Activated naive CD4-positive, alpha-beta T cell treated with anti-CD3 and anti-CD28 coated beads for 36 hours (primary cell): ENCODE measurements at regions of chr15 and their contacts with region 1.

Region 1: DNA sequence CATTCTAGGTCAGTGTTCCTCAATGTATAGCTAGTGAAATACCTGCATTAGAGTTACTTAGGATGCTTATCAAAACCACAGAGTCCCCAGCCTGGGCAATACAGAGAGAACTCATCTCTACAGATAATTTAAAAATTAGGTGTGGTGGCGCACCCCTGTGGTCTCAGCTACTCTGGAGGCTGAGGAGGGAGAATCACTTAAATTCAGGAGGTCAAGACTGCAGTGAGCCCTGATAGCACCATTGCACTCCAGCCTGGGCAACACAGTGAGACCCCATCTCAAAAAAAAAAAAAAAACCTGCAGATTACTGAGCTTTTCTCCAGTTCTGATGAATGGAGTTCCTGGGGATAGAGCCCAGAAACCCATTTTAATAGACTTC is 10.1 kb upstream of the MINDY2 start:
- DNase-seq: peak; percentile 62
- H3K4me3 Mint-ChIP-seq: no peak overlapping the region
- H3K27ac Mint-ChIP-seq: no peak overlapping the region
- H3K4me1 Mint-ChIP-seq: no peaks in the 10 kb centered on the region
- H3K27me3 Mint-ChIP-seq: no peaks in the 10 kb centered on the region

Region 2: DNA sequence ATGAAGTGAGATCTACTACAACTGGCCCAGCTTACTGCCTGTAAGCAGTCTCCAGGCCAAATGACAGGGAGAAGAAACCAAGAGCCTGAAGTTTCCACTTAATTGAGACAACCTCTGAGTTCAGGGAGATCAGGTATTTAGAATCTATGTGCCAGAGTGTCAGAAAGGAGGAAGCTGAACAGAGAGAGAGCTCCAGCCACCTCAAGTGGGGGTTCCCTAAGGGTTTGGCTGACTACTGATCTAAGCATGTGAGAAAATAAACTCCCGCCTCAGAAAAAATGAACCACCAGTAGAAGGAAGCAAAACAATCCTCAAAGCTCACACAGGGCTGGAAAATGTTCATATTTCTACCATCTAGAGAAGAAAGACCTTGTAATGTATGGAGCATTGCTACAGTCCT is 36.5 kb before region 1 on chr15:
- CTCF ChIA-PET with region 1: no interaction called
- intact Hi-C with region 1: no loop called
- DNase-seq: peak; percentile 28
- H3K4me3 Mint-ChIP-seq: no peak overlapping the region
- H3K27ac Mint-ChIP-seq: no peak overlapping the region
- H3K4me1 Mint-ChIP-seq: peaks cover 42% of the 10 kb centered on the region
- H3K27me3 Mint-ChIP-seq: no peaks in the 10 kb centered on the region

Region 3: DNA sequence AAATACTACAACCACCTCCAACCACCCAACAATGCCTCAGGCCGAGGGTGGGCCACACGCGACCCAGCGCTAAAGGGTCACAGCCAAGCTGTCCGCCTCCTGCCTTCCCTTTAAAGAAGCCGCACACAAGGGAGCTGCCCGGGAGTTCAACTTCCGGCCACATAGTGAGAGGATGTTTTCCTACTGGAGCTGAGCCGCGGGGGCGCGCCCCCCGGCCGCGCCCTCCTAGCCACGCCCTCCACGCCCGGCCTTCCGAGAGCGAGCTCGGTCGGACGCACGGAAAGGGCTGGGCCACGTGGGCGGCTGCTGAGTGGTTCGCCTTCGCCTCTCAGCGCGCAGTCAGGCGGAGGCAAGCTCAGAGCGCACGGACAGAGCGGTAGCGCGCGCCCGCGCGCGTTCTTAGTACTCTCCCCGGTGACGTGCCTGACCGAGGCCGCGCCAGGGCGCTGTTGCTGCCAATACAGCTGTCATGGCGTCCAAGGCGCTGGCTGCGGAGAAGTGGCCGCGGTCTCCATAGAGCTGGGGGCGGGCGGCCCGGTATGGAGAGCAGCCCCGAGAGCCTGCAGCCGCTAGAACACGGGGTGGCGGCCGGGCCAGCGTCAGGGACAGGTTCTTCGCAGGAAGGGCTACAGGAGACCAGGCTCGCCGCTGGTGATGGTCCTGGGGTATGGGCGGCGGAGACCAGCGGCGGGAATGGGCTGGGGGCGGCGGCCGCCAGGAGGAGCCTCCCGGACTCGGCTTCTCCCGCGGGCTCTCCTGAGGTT is 10.0 kb after region 1 on chr15 and contains the start of gene MINDY2:
- CTCF ChIA-PET with region 1: interaction called, 13 read pairs
- intact Hi-C with region 1: no loop called
- DNase-seq: peak; percentile 95
- H3K4me3 Mint-ChIP-seq: peak within 1 kb of the TSS; percentile 92
- H3K27ac Mint-ChIP-seq: peak within 1 kb of the TSS; percentile 65
- H3K4me1 Mint-ChIP-seq: no peaks in the 10 kb centered on the region
- H3K27me3 Mint-ChIP-seq: no peaks in the 10 kb centered on the region
- total RNA-seq, gene MINDY2: 4.6 to 6.6 TPM

Region 4: DNA sequence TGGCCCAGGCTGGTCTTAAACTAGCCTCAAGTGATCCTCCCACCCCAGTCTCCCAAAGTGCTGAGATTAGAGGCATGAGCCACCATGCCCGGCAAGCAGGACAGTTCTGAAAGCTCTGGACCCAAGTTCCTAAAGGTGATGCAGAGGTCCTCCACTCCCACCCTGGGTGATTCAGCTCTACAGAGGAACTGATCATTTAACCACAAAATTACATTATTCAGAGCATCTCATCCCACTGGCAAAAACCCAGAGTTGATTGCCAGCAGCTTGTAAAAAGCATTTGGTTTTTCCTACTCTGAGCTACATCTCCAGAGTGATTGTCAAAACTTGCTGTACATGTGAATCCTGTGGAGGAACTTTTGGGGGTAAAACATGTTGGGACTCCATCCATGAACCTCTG is 112.3 kb after region 1 on chr15:
- CTCF ChIA-PET with region 1: no interaction called
- intact Hi-C with region 1: no loop called
- DNase-seq: no peak
- H3K4me3 Mint-ChIP-seq: no peak overlapping the region
- H3K27ac Mint-ChIP-seq: no peak overlapping the region
- H3K4me1 Mint-ChIP-seq: no peaks in the 10 kb centered on the region
- H3K27me3 Mint-ChIP-seq: no peaks in the 10 kb centered on the region